BJ (cell line): ENCODE measurements at regions of chr18 and their contacts with region 1.

Region 1: DNA sequence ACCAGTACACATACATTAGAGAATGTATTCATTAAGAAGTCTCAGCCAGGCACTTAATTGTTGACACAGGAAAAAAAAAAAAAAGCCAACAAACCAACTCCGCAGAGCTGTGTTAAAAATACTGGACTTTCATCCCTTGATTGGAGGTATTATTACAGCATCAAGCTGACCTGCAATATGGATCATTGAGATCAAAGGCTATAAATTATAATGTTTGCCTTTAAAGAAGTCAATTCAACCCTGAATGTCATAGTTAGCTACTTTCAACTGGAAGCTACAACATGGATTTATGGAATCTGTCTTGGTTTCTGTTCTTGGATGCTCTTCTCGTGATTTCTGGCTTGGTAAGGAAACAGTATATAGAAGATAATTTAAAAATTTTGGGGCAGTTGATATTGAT is at the start of gene MEP1B:
- DNase-seq: no peak
- H3K4me3 ChIP-seq: no peak within 1 kb of the TSS
- H3K27me3 ChIP-seq: no peaks in the 10 kb centered on the region
- CTCF ChIP-seq: no peak
- polyA plus RNA-seq, gene MEP1B: not detected in 2 replicates

Region 2: GRCh38 chr18:32200766-32201165 is 11.0 kb after region 1 on chr18:
- CTCF ChIA-PET with region 1: interaction called, 6 read pairs
- POLR2A ChIA-PET with region 1: interaction called, 15 read pairs
- DNase-seq: no peak
- H3K4me3 ChIP-seq: no peak overlapping the region
- H3K27me3 ChIP-seq: no peaks in the 10 kb centered on the region
- CTCF ChIP-seq: no peak